ENCODE measurements at regions of chr5 and their contacts with region 1.

Region 1: DNA sequence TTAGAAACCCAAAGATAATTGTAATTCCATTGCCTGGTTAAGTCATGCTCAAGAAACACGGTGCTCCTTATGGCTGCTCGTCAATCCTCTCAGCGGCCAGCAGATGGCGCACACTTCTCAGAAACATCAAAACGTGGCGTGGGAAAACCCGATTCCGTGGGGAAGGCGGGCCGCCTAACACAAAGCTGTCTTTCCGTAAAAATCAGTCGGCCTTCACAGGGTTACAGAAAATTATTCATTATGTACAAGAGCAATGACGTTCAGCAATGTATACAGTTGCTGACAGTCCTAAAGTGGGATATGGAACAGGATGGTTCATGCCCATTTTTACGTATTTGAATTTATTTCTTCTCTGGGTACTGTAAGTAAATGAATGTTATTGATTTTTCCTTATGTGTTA is 83.5 kb downstream of the PDE4D start:
- DNase-seq: peak; percentile 60 to 82 (median 65)
- H3K4me3 ChIP-seq: peak overlapping the region in 1 of 3 experiments; percentile 50
- H3K4me3 Mint-ChIP-seq: peak overlapping the region; percentile 67 to 76
- H3K27ac ChIP-seq: no peak overlapping the region
- H3K27ac Mint-ChIP-seq: no peak overlapping the region
- H3K4me1 ChIP-seq: peaks cover 10 to 14% of the 10 kb centered on the region in 2 donors
- H3K4me1 Mint-ChIP-seq: peaks cover 12% of the 10 kb centered on the region
- H3K27me3 ChIP-seq: no peaks in the 10 kb centered on the region
- H3K27me3 Mint-ChIP-seq: peaks cover 0 to 4% (median 0%) of the 10 kb centered on the region in 3 donors
- CTCF ChIP-seq: peak; percentile 97

Region 2: GRCh38 chr5:59390074-59390659 is 419.9 kb before region 1 on chr5:
- intact Hi-C with region 1: loop called in 1 of 2 experiments (anchors 5 kb)
- DNase-seq: peak; percentile 2 to 18 (median 12)
- H3K4me3 ChIP-seq: no peak overlapping the region
- H3K4me3 Mint-ChIP-seq: no peak overlapping the region
- H3K27ac ChIP-seq: no peak overlapping the region
- H3K27ac Mint-ChIP-seq: no peak overlapping the region
- H3K4me1 ChIP-seq: no peaks in the 10 kb centered on the region
- H3K4me1 Mint-ChIP-seq: no peaks in the 10 kb centered on the region
- H3K27me3 ChIP-seq: no peaks in the 10 kb centered on the region
- H3K27me3 Mint-ChIP-seq: no peaks in the 10 kb centered on the region
- CTCF ChIP-seq: peak; percentile 92

Region 3: GRCh38 chr5:59856358-59856757 is 46.3 kb after region 1 on chr5:
- intact Hi-C with region 1: no loop called
- DNase-seq: no peak
- H3K4me3 ChIP-seq: no peak overlapping the region
- H3K4me3 Mint-ChIP-seq: no peak overlapping the region
- H3K27ac ChIP-seq: no peak overlapping the region
- H3K27ac Mint-ChIP-seq: no peak overlapping the region
- H3K4me1 ChIP-seq: no peaks in the 10 kb centered on the region
- H3K4me1 Mint-ChIP-seq: no peaks in the 10 kb centered on the region
- H3K27me3 ChIP-seq: no peaks in the 10 kb centered on the region
- H3K27me3 Mint-ChIP-seq: peaks cover 0 to 3% (median 0%) of the 10 kb centered on the region in 3 donors
- CTCF ChIP-seq: no peak

Region 4: GRCh38 chr5:60287174-60287771 is 477.2 kb after region 1 on chr5:
- intact Hi-C with region 1: loop called (anchors 5 kb)
- DNase-seq: peak; percentile 63 to 75 (median 72)
- H3K4me3 ChIP-seq: no peak overlapping the region
- H3K4me3 Mint-ChIP-seq: peak overlapping the region in 1 of 2 donors; percentile 13
- H3K27ac ChIP-seq: no peak overlapping the region
- H3K27ac Mint-ChIP-seq: no peak overlapping the region
- H3K4me1 ChIP-seq: peaks cover 21 to 24% of the 10 kb centered on the region in 2 donors
- H3K4me1 Mint-ChIP-seq: peaks cover 25% of the 10 kb centered on the region
- H3K27me3 ChIP-seq: no peaks in the 10 kb centered on the region
- H3K27me3 Mint-ChIP-seq: no peaks in the 10 kb centered on the region
- CTCF ChIP-seq: peak; percentile 92

Region 5: DNA sequence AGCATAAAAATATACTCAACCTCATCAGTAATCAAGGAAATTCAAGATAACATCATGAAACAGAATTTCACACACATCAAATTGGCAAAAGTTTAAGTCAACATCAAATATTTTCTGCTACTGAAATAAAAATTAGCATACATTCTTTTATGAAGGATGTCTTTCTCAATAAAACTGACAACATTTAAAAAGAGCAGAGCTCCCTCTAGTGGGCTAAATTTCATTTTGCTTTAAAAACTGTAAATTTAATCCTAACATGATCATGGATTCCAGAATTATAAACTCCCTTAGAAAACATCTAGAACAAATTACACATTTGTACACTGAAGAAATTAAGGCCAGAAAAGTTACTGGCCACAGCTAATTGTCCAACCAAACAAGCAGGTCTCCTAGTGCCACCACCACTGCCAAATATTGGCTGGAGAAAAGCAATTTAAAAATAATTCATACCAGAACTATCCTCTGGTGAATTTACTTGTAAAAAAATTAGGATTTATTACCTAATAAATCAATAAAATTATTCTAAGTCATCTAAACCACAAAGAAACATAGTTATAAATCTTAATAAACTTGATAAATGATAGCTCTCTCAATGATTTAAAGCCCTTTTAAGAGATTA is 858.8 kb after region 1 on chr5:
- intact Hi-C with region 1: loop called (anchors 2 to 5 kb)
- DNase-seq: peak; percentile 32 to 68 (median 43)
- H3K4me3 ChIP-seq: no peak overlapping the region
- H3K4me3 Mint-ChIP-seq: no peak overlapping the region
- H3K27ac ChIP-seq: no peak overlapping the region
- H3K27ac Mint-ChIP-seq: no peak overlapping the region
- H3K4me1 ChIP-seq: no peaks in the 10 kb centered on the region
- H3K4me1 Mint-ChIP-seq: no peaks in the 10 kb centered on the region
- H3K27me3 ChIP-seq: no peaks in the 10 kb centered on the region
- H3K27me3 Mint-ChIP-seq: peaks cover 0 to 1% (median 0%) of the 10 kb centered on the region in 3 donors
- CTCF ChIP-seq: peak; percentile 83